CD8-positive, alpha-beta T cell (primary cell): ENCODE measurements at regions of chr6 and their contacts with region 1.

Region 1: DNA sequence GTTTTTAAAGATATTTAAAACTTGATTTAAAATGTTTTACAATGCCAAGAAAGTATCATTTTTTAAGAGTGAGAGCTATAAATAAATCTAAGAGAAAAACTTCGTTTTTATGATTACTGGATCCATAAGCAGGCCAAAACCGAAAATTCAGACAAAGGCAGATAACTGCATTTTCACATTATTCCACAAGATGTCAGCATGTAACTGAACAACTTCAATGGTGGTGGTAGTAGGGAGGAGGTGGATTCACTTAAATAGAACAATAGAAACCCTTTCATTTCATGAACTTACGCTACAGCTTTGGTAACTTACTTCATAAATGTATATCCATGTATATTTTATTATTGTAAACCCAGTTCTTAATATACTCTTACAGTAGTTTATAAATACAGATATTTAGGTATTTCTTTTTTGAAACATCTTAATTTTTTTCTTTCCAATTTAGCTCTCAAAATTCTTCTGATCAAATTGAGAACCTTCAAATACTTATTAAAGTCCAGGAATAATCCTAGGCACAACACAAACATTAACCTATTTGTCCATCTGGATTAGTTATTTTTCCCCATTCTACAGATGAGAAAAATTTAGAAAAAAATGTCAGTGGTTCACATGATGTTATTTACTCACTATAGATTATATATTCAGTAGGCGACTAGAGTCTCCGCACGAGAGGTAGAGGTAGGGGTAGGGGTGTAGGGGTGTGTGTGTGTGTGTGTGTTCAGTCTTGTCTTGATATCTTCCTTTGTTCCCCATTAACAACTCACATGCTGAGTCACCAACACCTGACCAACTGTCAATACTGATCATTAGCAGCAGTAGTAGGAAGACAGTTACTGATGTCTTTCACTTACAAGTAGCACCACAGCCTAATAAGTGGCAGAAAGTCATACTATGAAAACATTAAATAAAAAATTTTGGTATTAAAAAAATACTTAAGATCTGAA is 111.5 kb downstream of the ARHGAP18 start:
- DNase-seq: peak in 3 of 9 experiments; percentile 9 to 83 (median 75)
- ATAC-seq: peak; percentile 99
- H3K4me3 ChIP-seq: no peak overlapping the region
- H3K4me3 Mint-ChIP-seq: no peak overlapping the region
- H3K27ac ChIP-seq: no peak overlapping the region
- H3K27ac Mint-ChIP-seq: no peak overlapping the region
- H3K4me1 ChIP-seq: no peaks in the 10 kb centered on the region
- H3K4me1 Mint-ChIP-seq: peaks cover 1% of the 10 kb centered on the region
- H3K27me3 ChIP-seq: no peaks in the 10 kb centered on the region
- H3K27me3 Mint-ChIP-seq: no peaks in the 10 kb centered on the region
- CTCF ChIP-seq: peak; percentile 96

Region 2: GRCh38 chr6:129498950-129499842 is 99.3 kb before region 1 on chr6:
- CTCF ChIA-PET with region 1: interaction called, 8 read pairs
- POLR2A ChIA-PET with region 1: no interaction called
- intact Hi-C with region 1: loop called in 1 of 2 experiments (anchors 5 kb)
- DNase-seq: peak in 3 of 9 experiments; percentile 22 to 76 (median 67)
- ATAC-seq: peak; percentile 68
- H3K4me3 ChIP-seq: no peak overlapping the region
- H3K4me3 Mint-ChIP-seq: peak overlapping the region; percentile 53
- H3K27ac ChIP-seq: no peak overlapping the region
- H3K27ac Mint-ChIP-seq: no peak overlapping the region
- H3K4me1 ChIP-seq: peaks cover 4% of the 10 kb centered on the region
- H3K4me1 Mint-ChIP-seq: peaks cover 9% of the 10 kb centered on the region
- H3K27me3 ChIP-seq: no peaks in the 10 kb centered on the region
- H3K27me3 Mint-ChIP-seq: no peaks in the 10 kb centered on the region
- CTCF ChIP-seq: peak; percentile 69

Region 3: DNA sequence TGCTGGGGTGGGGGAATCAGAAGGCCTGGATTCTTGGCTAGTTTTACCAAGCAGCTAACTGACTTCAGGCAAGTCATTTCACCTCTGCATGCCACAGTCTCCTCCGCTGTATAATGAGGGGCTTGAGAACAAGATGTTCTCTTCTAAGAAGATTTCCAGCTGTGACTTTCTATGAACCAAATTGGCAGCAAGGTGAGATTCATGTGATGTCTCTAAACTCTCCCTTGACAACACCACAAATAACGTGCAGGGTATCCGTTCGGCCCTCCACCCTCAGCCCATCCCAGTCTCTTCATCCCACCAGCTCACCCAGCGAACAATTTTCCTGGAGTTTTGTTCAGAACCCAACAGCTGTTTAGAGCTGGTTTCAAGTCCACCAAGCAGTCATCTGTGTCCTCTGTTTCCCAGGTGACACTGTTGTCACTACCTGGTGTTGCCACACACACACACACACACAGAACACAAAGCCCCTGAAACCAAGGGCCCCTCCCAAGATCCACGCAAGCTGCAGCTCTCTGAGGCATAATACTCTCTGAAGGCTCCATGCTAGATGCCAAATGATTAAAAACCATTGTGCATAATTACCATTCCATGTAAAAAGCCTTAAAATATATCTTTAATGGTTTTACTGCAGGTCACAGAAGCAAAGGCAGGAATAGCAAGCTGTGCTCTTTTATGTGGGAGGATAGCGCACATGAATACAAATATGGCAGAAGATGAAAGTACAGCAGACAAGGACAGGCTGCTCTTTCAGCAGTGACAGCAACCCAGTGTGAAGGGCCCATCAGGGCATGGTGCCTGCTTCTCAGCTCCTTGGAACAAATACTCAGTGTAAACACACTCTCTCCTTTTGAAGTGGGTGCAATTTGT is 63.3 kb after region 1 on chr6:
- CTCF ChIA-PET with region 1: interaction called, 10 read pairs
- POLR2A ChIA-PET with region 1: no interaction called
- intact Hi-C with region 1: no loop called
- DNase-seq: no peak
- ATAC-seq: no peak
- H3K4me3 ChIP-seq: no peak overlapping the region
- H3K4me3 Mint-ChIP-seq: no peak overlapping the region
- H3K27ac ChIP-seq: no peak overlapping the region
- H3K27ac Mint-ChIP-seq: no peak overlapping the region
- H3K4me1 ChIP-seq: no peaks in the 10 kb centered on the region
- H3K4me1 Mint-ChIP-seq: peaks cover 14% of the 10 kb centered on the region
- H3K27me3 ChIP-seq: no peaks in the 10 kb centered on the region
- H3K27me3 Mint-ChIP-seq: no peaks in the 10 kb centered on the region
- CTCF ChIP-seq: no peak

Region 4: DNA sequence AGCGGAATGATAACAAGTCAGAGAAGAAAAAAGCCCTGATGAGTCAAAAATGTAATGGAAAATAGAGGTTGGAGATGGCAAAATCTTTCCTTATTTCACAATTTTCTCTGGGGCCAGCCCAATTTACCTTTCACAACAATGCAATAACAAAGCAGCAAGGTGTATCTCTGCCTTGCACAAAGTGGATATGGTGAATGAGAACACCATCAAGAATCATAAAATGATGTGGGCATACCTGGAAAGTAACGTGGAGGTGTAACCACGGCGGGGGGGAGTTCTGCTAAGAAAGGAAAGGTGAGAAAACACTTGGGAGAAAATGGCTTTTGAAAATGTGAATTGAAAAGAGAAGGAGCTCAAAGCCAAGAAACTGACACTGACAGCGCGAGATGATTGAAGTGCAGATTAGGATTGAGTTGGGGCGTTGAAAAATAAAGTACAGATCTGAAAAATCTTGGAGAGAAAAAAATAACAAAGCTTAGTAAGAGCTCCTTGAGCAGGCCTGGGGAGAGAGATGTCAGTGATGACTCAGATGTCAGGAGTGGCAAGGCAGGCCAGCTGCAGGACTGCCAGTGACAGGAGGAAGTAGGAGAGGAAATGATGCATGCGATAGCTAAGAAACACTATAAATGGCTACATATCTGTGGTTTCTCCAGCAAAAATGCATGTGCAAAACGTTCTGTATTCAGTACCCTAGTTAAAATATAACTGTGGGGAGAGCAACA is 85.2 kb after region 1 on chr6:
- CTCF ChIA-PET with region 1: interaction called, 10 read pairs
- POLR2A ChIA-PET with region 1: no interaction called
- intact Hi-C with region 1: no loop called
- DNase-seq: peak; percentile 13 to 88 (median 68)
- ATAC-seq: peak; percentile 89
- H3K4me3 ChIP-seq: no peak overlapping the region
- H3K4me3 Mint-ChIP-seq: no peak overlapping the region
- H3K27ac ChIP-seq: peak overlapping the region in 1 of 2 experiments; percentile 75
- H3K27ac Mint-ChIP-seq: peak overlapping the region; percentile 53
- H3K4me1 ChIP-seq: peaks cover 42% of the 10 kb centered on the region
- H3K4me1 Mint-ChIP-seq: peaks cover 42% of the 10 kb centered on the region
- H3K27me3 ChIP-seq: no peaks in the 10 kb centered on the region
- H3K27me3 Mint-ChIP-seq: no peaks in the 10 kb centered on the region
- CTCF ChIP-seq: no peak

Region 5: GRCh38 chr6:129730477-129731165 is 132.1 kb after region 1 on chr6:
- CTCF ChIA-PET with region 1: interaction called, 226 read pairs
- POLR2A ChIA-PET with region 1: interaction called, 3 read pairs
- intact Hi-C with region 1: loop called (anchors 1 kb)
- DNase-seq: peak in 4 of 9 experiments; percentile 16 to 70 (median 46)
- ATAC-seq: peak; percentile 67
- H3K4me3 ChIP-seq: no peak overlapping the region
- H3K4me3 Mint-ChIP-seq: no peak overlapping the region
- H3K27ac ChIP-seq: no peak overlapping the region
- H3K27ac Mint-ChIP-seq: no peak overlapping the region
- H3K4me1 ChIP-seq: no peaks in the 10 kb centered on the region
- H3K4me1 Mint-ChIP-seq: peaks cover 11% of the 10 kb centered on the region
- H3K27me3 ChIP-seq: no peaks in the 10 kb centered on the region
- H3K27me3 Mint-ChIP-seq: no peaks in the 10 kb centered on the region
- CTCF ChIP-seq: peak; percentile 67

Region 6: GRCh38 chr6:129774697-129775447 is 176.4 kb after region 1 on chr6:
- CTCF ChIA-PET with region 1: interaction called, 20 read pairs
- POLR2A ChIA-PET with region 1: no interaction called
- intact Hi-C with region 1: loop called in 1 of 2 experiments (anchors 1 kb)
- DNase-seq: peak in 7 of 9 experiments; percentile 26 to 66 (median 47)
- ATAC-seq: no peak
- H3K4me3 ChIP-seq: no peak overlapping the region
- H3K4me3 Mint-ChIP-seq: no peak overlapping the region
- H3K27ac ChIP-seq: no peak overlapping the region
- H3K27ac Mint-ChIP-seq: no peak overlapping the region
- H3K4me1 ChIP-seq: no peaks in the 10 kb centered on the region
- H3K4me1 Mint-ChIP-seq: no peaks in the 10 kb centered on the region
- H3K27me3 ChIP-seq: no peaks in the 10 kb centered on the region
- H3K27me3 Mint-ChIP-seq: peaks cover 8% of the 10 kb centered on the region
- CTCF ChIP-seq: peak; percentile 64

Region 7: GRCh38 chr6:130020907-130021629 is 422.6 kb after region 1 on chr6:
- CTCF ChIA-PET with region 1: interaction called, 28 read pairs
- POLR2A ChIA-PET with region 1: interaction called, 3 read pairs
- intact Hi-C with region 1: loop called (anchors 1 kb)
- DNase-seq: peak; percentile 57 to 93 (median 78)
- ATAC-seq: peak; percentile 45
- H3K4me3 ChIP-seq: peak overlapping the region; percentile 61 to 85
- H3K4me3 Mint-ChIP-seq: peak overlapping the region; percentile 98
- H3K27ac ChIP-seq: peak overlapping the region; percentile 60 to 82
- H3K27ac Mint-ChIP-seq: peak overlapping the region; percentile 96
- H3K4me1 ChIP-seq: peaks cover 11% of the 10 kb centered on the region
- H3K4me1 Mint-ChIP-seq: peaks cover 43% of the 10 kb centered on the region
- H3K27me3 ChIP-seq: no peaks in the 10 kb centered on the region
- H3K27me3 Mint-ChIP-seq: no peaks in the 10 kb centered on the region
- CTCF ChIP-seq: peak; percentile 63